Gastrocnemius medialis (tissue), 4 donors: ENCODE measurements at regions of chr22 and their contacts with region 1.

Region 1: DNA sequence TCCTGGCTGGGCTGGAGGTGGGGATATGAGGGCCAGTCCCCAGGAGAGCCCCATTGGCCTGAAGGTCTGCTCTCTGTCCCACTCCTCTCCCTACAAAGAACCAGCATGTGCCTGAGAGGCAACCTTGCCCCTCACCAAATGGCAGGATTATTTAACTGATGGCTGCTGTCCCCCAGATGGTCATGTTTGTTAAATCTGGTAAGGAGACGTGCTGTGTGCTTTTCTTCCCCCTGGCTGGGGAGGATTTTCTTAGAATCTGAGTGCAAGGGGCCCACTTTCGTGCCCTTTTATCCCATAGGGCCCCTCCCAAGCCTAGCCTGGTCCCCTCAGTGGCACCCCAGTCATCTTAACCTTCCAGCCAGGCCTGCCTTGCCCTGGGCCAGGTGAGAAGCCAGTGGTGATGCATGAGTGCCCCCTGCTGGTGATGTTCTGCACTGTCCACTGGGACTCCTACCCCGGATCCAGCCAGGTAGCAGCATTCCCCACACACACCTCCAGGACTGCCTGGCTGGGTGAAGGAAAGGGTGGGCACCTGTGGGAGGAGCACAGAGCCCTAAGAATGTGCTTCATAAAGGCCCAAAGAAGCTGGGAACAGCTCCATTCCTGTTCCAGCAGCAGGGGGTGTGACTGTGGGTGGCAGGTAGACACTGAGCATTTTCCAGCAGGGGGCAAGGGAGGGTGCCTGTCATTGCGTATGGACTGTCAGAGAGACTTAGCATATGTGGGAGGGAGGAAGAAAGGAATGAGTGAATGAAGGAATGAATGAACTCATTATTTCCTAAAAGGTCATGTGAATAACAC is 28.9 kb downstream of the MFNG start:
- DNase-seq: peak in 1 of 2 donors; percentile 17
- ATAC-seq: peak in 1 of 2 donors; percentile 44
- H3K4me3 ChIP-seq: no peak overlapping the region
- H3K27ac ChIP-seq: no peak overlapping the region
- H3K4me1 ChIP-seq: no peaks in the 10 kb centered on the region
- H3K27me3 ChIP-seq: peaks cover 0 to 42% (median 19%) of the 10 kb centered on the region in 3 donors
- CTCF ChIP-seq: peak; percentile 37 to 69 (median 63)
- POLR2A ChIP-seq: no peak

Region 2: GRCh38 chr22:37328017-37328416 is 129.3 kb before region 1 on chr22:
- in situ Hi-C with region 1: loop called in 1 of 4 experiments (anchors 10 kb)
- intact Hi-C with region 1: no loop called
- DNase-seq: no peak
- ATAC-seq: no peak
- H3K4me3 ChIP-seq: no peak overlapping the region
- H3K27ac ChIP-seq: no peak overlapping the region
- H3K4me1 ChIP-seq: no peaks in the 10 kb centered on the region
- H3K27me3 ChIP-seq: peaks cover 68 to 92% (median 76%) of the 10 kb centered on the region in 3 donors
- CTCF ChIP-seq: no peak
- POLR2A ChIP-seq: no peak

Region 3: DNA sequence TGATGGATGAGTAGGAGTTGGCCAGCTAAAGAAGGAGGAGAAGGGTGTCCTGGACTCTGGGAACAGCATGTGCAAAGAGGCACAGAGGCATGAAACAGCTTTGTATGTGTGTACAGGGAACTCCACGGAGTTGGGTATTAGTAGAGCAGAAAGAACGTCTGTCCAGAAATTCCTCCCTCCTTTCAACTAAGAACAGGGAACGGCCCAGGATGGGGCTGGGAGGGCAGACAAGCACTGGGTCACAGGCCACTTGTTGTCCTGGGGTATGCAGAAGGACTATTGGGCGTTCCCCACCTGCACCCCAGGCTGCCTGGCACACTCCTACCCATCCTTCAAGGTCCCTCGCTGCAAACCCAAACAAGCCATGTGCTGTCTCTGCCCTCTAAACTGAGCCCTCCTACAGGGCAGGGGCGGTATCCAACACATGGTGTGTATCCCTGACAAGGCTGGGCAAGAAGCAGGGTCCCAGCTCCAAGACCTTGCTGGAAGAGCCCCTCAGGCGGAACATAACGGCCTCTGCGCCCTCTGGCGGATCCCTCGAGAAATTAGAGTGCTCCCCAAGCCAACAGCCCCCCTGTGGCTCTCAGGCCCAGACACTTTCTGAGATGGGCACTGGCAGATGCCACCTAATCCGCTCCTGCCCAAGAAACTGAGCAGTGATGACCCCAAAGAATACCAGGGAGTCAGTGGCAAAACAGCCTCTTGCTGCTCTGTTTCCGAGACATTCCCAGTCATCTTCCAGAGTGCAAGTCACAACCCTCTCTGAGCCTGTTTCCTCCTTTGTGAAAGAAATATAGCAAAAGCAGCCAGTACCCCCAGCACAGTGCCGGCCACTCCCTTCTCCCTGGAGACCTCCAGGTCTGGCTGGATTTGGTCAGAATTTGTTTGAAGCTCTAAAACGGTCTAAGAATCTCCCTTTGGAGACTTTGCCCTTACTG is 28.4 kb before region 1 on chr22:
- in situ Hi-C with region 1: no loop called
- intact Hi-C with region 1: no loop called
- DNase-seq: no peak
- ATAC-seq: no peak
- H3K4me3 ChIP-seq: no peak overlapping the region
- H3K27ac ChIP-seq: no peak overlapping the region
- H3K4me1 ChIP-seq: no peaks in the 10 kb centered on the region
- H3K27me3 ChIP-seq: peaks cover 60 to 86% (median 72%) of the 10 kb centered on the region in 3 donors
- CTCF ChIP-seq: peak in 2 of 5 experiments; percentile 14 to 29
- POLR2A ChIP-seq: no peak